Sigmoid colon (tissue), 7 donors: ENCODE measurements at regions of chr5 and their contacts with region 1.

Region 1: GRCh38 chr5:65925601-65926275 is 637 bp upstream of the ERBIN start:
- DNase-seq: peak; percentile 89
- H3K4me3 ChIP-seq: peak overlapping the region; percentile 68 to 92 (median 82)
- H3K27ac ChIP-seq: peak overlapping the region; percentile 91 to 100 (median 98)
- H3K4me1 ChIP-seq: peaks cover 0 to 31% (median 22%) of the 10 kb centered on the region in 4 donors
- H3K27me3 ChIP-seq: no peaks in the 10 kb centered on the region
- CTCF ChIP-seq: peak in 2 of 4 experiments; percentile 21 to 24
- EP300 ChIP-seq: peak in 1 of 4 donors; percentile 10
- POLR2A ChIP-seq: peak; percentile 68 to 72

Region 2: GRCh38 chr5:65624571-65625555 is 300.9 kb before region 1 on chr5 and contains the starts of genes SHLD3 and TRAPPC13:
- intact Hi-C with region 1: loop called (anchors 10 kb)
- DNase-seq: peak; percentile 92
- H3K4me3 ChIP-seq: peak within 1 kb of the TSS; percentile 70 to 90 (median 76)
- H3K27ac ChIP-seq: peak within 1 kb of the TSS; percentile 80 to 92 (median 83)
- H3K4me1 ChIP-seq: peaks cover 0 to 41% (median 34%) of the 10 kb centered on the region in 4 donors
- H3K27me3 ChIP-seq: no peaks in the 10 kb centered on the region
- CTCF ChIP-seq: peak in 1 of 4 experiments; percentile 40
- EP300 ChIP-seq: no peak
- POLR2A ChIP-seq: no peak
- total RNA-seq, gene SHLD3: 2.4 to 3.6 (median 3.3) TPM
- total RNA-seq, gene TRAPPC13: 24.4 to 43.2 (median 30.5) TPM

Region 3: DNA sequence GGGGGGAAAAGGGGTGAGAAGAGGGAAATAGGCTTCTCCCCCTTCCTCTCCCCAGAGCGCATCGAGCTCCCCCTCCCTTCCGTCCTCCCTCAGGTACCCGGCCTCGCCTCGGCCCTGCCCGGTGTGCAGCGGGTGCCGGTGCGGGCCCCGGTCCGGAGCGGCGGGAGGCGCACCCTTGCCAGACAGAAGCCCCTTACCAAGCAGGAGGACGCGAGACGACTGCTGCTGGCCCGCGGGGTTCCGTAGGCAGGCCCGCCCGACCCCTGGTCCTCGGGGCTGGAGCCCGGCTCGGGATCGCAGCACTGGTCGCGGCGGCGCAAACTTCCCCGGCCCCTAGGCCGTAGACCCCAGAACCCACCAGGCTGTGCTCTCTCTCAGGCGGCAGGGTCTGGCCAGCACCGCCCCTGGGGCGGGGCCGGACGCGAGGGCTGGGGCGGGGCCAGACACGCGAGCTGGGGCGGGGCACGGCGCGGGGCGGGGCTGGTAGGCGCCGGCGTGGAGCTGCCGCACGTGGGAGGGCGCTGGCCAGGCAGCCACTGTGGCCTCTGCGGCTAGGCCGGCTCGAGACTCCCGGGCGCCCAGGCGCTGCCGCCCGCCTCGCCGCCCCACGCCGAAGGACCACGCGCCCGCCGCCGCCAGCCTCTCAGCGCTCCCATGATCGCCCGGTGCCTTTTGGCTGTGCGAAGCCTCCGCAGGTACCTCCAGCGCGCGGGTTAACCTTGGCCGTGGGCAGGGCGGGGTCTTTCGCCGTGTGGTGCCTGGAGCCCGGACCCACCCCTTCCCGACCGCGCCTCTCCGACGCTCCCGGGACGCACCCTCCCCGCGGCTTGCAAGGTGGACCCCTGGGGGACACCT is 203.8 kb before region 1 on chr5 and contains the starts of genes NLN and SGTB:
- intact Hi-C with region 1: loop called (anchors 5 kb)
- DNase-seq: peak; percentile 90
- H3K4me3 ChIP-seq: peak within 1 kb of the TSS; percentile 84 to 98 (median 94)
- H3K27ac ChIP-seq: peak within 1 kb of the TSS; percentile 69 to 87 (median 80)
- H3K4me1 ChIP-seq: peaks cover 0 to 25% (median 4%) of the 10 kb centered on the region in 4 donors
- H3K27me3 ChIP-seq: no peaks in the 10 kb centered on the region
- CTCF ChIP-seq: no peak
- EP300 ChIP-seq: no peak
- POLR2A ChIP-seq: no peak
- total RNA-seq, gene NLN: 4.8 to 8.9 (median 7.0) TPM
- total RNA-seq, gene SGTB: 10.2 to 13.9 (median 11.6) TPM

Region 4: DNA sequence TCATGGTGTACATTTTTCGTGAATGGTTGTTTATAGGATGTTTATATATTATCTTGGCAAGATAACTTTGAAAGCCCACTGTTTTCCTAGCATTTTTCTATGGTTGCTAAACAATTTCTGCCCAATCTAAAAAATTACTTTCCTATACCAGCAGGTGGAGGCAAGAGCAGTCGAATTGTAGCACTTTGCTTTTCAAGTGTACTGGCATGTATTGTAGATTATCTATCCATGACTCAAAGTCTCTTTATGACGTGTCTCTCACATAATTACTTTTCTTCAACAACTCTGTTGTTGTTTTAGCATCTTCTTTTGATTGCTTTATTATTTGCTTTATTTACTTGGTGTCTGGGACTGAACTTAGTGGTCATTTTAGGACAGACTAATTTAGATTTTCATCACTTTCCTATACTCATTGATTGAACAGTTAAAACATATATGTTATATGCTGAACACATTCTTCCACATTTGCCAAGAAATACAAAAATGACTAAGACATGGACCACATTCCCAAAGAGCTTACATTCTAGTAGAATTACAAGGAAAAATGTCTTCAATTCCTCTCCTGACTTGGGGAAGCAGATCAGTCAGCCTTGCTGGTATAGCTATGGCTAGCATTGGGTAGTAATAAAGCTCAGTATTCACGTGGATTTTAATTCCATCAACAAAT is 183.0 kb before region 1 on chr5:
- intact Hi-C with region 1: loop called (anchors 5 kb)
- DNase-seq: no peak
- H3K4me3 ChIP-seq: no peak overlapping the region
- H3K27ac ChIP-seq: no peak overlapping the region
- H3K4me1 ChIP-seq: no peaks in the 10 kb centered on the region
- H3K27me3 ChIP-seq: no peaks in the 10 kb centered on the region
- CTCF ChIP-seq: peak in 3 of 4 experiments; percentile 36 to 46 (median 46)
- EP300 ChIP-seq: no peak
- POLR2A ChIP-seq: no peak

Region 5: DNA sequence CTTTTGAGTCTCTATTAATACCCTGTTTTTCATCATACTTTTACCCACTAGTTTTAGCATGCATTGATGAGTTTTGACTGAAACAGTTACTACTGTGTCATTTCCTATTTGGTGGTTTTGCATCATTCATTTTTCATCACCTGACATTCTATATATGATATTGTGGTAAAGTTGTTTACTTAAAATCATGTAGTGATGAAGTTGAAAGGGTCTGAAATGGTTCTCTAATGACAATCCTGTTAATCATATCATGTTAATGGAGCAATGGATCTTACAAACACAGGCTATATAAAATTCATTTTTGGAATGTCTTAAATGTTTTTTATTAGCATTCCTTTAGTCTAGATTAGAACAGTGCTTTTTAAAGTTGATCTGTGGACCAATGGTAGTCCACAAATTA is 84.7 kb after region 1 on chr5:
- intact Hi-C with region 1: loop called (anchors 10 kb)
- DNase-seq: no peak
- H3K4me3 ChIP-seq: no peak overlapping the region
- H3K27ac ChIP-seq: no peak overlapping the region
- H3K4me1 ChIP-seq: peaks cover 0 to 20% (median 6%) of the 10 kb centered on the region in 4 donors
- H3K27me3 ChIP-seq: no peaks in the 10 kb centered on the region
- CTCF ChIP-seq: no peak
- EP300 ChIP-seq: no peak
- POLR2A ChIP-seq: no peak

Region 6: GRCh38 chr5:66144074-66144833 is 218.5 kb after region 1 on chr5 and contains the start of gene SREK1:
- intact Hi-C with region 1: loop called (anchors 1 kb)
- DNase-seq: peak; percentile 96
- H3K4me3 ChIP-seq: peak within 1 kb of the TSS; percentile 83 to 90 (median 86)
- H3K27ac ChIP-seq: peak within 1 kb of the TSS; percentile 96 to 99 (median 99)
- H3K4me1 ChIP-seq: peaks cover 0 to 46% (median 28%) of the 10 kb centered on the region in 4 donors
- H3K27me3 ChIP-seq: no peaks in the 10 kb centered on the region
- CTCF ChIP-seq: no peak
- EP300 ChIP-seq: no peak
- POLR2A ChIP-seq: peak; percentile 71 to 75
- total RNA-seq, gene SREK1: 63.5 to 127 (median 85.6) TPM